IMR-90 (cell line): ENCODE measurements at regions of chr3 and their contacts with region 1.

Region 1: DNA sequence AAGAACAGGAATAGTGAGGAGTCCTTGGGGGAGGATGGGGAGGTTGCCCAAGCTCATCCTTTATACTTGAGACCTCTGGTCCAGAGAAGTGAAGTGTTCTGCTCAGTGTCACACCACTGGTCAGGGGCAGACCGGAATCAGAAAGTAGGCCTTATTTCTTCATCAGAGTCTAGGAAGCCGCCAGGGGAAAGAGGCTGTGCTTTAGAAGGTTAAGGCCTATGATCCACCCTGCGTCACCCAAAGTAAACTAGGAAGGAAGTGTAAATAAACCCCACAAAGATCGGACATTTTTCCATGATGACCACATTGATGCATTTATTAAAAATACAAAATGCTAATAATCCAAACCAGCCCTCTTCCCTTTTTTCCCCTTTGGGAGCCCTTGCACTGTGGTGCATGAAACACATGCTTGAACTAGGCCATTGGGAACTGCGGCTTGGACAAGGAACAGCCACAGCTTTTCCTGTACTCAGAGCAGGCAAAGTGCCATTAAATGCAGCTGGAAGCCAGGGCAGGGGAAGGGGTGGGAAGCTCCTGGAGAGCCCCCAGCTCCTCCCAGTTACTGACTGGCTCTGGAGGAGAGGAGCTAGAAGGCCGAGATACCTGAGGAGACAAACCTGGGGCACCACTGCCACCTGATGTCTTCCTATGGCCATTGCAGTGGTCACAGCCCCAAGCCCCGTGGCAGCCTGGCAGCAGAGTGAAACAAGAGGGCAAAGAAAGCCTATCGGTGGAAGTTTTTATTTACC is 37.0 kb downstream of the CDC25A start:
- DNase-seq: peak; percentile 87
- ATAC-seq: peak; percentile 93
- H3K4me3 ChIP-seq: no peak overlapping the region
- H3K27ac ChIP-seq: peak overlapping the region; percentile 57
- H3K4me1 ChIP-seq: peaks cover 13% of the 10 kb centered on the region
- H3K27me3 ChIP-seq: no peaks in the 10 kb centered on the region
- CTCF ChIP-seq: peak; percentile 91
- POLR2A ChIP-seq: no peak
- RAD21 ChIP-seq: peak; percentile 96

Region 2: DNA sequence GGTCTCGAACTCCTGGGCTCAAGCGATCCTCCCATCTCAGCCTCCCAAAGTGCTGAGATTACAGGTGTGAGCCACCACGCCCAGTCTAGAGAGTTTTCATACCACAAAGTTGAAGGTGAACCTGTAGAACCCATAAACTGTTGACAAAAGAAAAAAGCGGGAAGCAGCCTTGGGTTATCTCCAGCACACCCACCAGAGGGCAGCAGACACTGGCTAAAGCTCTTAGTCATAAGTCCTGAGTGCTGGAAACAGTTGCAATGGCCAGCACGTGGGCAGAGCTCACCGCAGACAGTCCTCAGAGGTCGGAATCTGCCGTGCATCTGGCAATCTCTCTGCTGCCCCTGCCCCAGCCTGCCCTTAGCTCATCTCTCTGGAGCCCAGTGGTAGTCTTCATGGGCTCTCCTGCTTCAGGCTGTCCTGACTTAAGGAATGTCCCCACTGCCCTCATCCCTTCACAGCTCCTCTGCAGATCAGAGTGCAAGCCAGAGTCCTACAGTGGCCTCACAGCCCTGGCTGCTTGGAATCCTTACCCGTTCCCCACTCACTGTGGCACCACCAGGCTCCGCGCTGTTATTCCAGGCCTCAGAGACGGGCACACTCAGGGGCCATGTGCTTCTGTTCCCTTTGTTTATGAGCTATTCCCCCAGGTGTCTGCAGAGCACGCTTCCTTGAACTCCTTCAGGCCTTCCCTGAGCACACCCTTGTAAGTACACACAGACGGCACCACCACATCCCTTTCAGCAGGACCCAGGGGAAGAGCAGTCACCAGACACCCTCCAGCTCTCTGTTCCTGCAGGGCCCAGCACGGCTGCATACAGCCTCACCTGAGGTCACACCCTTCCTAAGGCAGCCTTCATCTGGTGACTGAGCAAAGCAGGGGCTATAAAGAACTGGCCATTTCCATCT is 628.9 kb before region 1 on chr3:
- CTCF ChIA-PET with region 1: no interaction called
- POLR2A ChIA-PET with region 1: no interaction called
- dilution Hi-C with region 1: no loop called
- in situ Hi-C with region 1: no loop called
- intact Hi-C with region 1: loop called (anchors 10 kb)
- DNase-seq: peak; percentile 91
- ATAC-seq: peak; percentile 99
- H3K4me3 ChIP-seq: no peak overlapping the region
- H3K27ac ChIP-seq: no peak overlapping the region
- H3K4me1 ChIP-seq: no peaks in the 10 kb centered on the region
- H3K27me3 ChIP-seq: no peaks in the 10 kb centered on the region
- CTCF ChIP-seq: peak; percentile 94
- POLR2A ChIP-seq: peak; percentile 60; the same call in 1 of the 2 replicates
- RAD21 ChIP-seq: peak; percentile 98

Region 3: DNA sequence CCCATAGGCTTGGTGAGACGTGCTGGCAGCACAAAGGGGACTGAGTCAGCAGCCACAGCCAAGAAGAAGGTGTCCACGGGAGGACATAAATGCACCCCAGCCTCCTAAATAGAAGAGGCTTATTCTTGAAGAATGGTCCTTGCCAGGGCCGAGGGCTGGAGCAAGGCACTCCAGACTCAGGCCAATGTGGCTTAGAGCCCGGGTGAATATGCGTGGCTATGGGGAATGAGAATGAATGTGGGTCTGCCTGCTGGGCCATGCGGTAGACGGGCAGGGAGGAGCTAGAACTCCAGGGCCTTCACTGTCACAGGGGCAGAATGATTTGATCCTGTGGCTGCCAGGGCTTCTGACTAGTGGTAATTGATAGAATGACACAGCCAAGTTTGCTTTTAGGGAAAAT is 314.2 kb before region 1 on chr3:
- CTCF ChIA-PET with region 1: interaction called, 9 read pairs
- POLR2A ChIA-PET with region 1: no interaction called
- dilution Hi-C with region 1: no loop called
- in situ Hi-C with region 1: loop called (anchors 5 kb)
- intact Hi-C with region 1: loop called (anchors 1 kb)
- DNase-seq: no peak
- ATAC-seq: no peak
- H3K4me3 ChIP-seq: no peak overlapping the region
- H3K27ac ChIP-seq: no peak overlapping the region
- H3K4me1 ChIP-seq: no peaks in the 10 kb centered on the region
- H3K27me3 ChIP-seq: no peaks in the 10 kb centered on the region
- CTCF ChIP-seq: no peak
- POLR2A ChIP-seq: no peak
- RAD21 ChIP-seq: no peak

Region 4: DNA sequence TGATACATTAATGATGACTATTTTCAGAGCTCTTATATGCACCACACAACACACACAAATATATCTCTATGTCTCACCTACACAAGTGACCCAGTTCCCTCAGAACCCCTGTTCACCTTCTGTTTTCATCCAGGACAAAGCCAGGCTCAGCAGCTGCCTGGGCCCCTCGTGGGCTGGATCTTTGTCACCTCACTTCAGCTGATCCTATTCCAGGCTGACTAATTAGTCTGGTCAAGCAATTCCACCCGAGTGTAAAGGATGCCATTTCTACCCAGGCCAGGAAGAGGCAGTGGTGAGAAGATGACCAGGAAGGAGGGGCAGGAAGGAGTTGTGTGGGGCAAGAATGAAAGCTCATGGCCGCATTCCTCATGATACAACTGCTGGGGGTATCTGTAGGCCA is 286.0 kb before region 1 on chr3:
- CTCF ChIA-PET with region 1: interaction called, 5 read pairs
- POLR2A ChIA-PET with region 1: no interaction called
- dilution Hi-C with region 1: no loop called
- in situ Hi-C with region 1: loop called (anchors 10 kb)
- intact Hi-C with region 1: loop called (anchors 10 kb)
- DNase-seq: no peak
- ATAC-seq: peak; percentile 55
- H3K4me3 ChIP-seq: no peak overlapping the region
- H3K27ac ChIP-seq: no peak overlapping the region
- H3K4me1 ChIP-seq: no peaks in the 10 kb centered on the region
- H3K27me3 ChIP-seq: no peaks in the 10 kb centered on the region
- CTCF ChIP-seq: 0 out of 2 replicates have a peak, but pooled peaks have one; percentile 4
- POLR2A ChIP-seq: no peak
- RAD21 ChIP-seq: 0 out of 2 replicates have a peak, but pooled peaks have one; percentile 4

Region 5: DNA sequence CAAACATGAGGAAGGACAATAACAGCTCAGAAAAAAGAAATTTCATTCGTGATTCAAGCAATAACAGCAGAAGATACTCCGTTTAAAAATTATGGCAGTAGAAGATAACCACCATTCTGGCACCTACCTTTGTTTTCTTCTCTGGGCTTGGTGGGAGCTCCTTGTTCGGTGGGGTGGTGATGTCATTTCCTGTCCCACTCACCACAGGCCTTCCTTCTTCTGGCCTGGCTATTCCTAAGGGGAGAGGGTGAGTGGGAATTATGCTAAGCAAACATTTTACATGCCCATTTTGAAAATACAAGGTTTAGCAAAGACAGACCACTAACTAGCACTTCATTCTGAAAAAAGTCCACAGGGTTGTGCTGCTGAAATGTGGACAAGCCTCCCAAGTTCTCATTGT is 273.9 kb before region 1 on chr3:
- CTCF ChIA-PET with region 1: interaction called, 4 read pairs
- POLR2A ChIA-PET with region 1: no interaction called
- dilution Hi-C with region 1: no loop called
- in situ Hi-C with region 1: no loop called
- intact Hi-C with region 1: loop called (anchors 10 kb)
- DNase-seq: peak; percentile 37
- ATAC-seq: no peak
- H3K4me3 ChIP-seq: no peak overlapping the region
- H3K27ac ChIP-seq: no peak overlapping the region
- H3K4me1 ChIP-seq: no peaks in the 10 kb centered on the region
- H3K27me3 ChIP-seq: no peaks in the 10 kb centered on the region
- CTCF ChIP-seq: no peak
- POLR2A ChIP-seq: no peak
- RAD21 ChIP-seq: no peak

Region 6: DNA sequence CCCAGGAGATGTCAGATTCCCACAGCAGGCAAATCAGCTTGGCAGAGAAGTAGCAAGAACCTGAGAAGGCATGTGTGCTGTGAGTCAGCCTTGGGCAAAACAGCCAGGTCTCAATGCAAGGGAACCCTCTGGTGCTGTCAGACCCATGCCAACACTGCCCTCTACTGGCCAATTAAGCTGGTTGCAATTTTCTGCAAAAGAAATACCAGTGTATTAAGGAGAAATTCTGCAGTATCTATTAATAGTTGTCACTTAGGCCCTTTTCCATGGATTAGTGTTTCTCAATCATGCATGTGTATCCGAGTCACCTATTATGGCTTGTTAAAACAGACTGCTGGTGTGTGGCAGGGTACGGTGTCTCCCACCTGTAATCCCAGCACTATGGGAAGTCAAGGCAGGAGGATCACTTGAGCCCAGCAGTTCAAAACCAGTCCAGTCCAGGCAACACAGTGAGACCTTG is 161.2 kb before region 1 on chr3:
- CTCF ChIA-PET with region 1: interaction called, 6 read pairs
- POLR2A ChIA-PET with region 1: no interaction called
- dilution Hi-C with region 1: no loop called
- in situ Hi-C with region 1: loop called (anchors 5 kb)
- intact Hi-C with region 1: loop called (anchors 1 kb)
- DNase-seq: peak; percentile 96
- ATAC-seq: peak; percentile 87
- H3K4me3 ChIP-seq: no peak overlapping the region
- H3K27ac ChIP-seq: no peak overlapping the region
- H3K4me1 ChIP-seq: peaks cover 4% of the 10 kb centered on the region; the same call in 1 of the 2 replicates
- H3K27me3 ChIP-seq: no peaks in the 10 kb centered on the region
- CTCF ChIP-seq: peak; percentile 97
- POLR2A ChIP-seq: no peak
- RAD21 ChIP-seq: peak; percentile 95

Region 7: GRCh38 chr3:48088749-48089466 is 62.3 kb before region 1 on chr3:
- CTCF ChIA-PET with region 1: interaction called, 9 read pairs
- POLR2A ChIA-PET with region 1: no interaction called
- dilution Hi-C with region 1: no loop called
- in situ Hi-C with region 1: no loop called
- intact Hi-C with region 1: loop called (anchors 1 kb)
- DNase-seq: peak; percentile 95
- ATAC-seq: peak; percentile 96
- H3K4me3 ChIP-seq: peak overlapping the region; percentile 84
- H3K27ac ChIP-seq: peak overlapping the region; percentile 92
- H3K4me1 ChIP-seq: 0 out of 2 replicates have a peak, but pooled peaks cover 6% of the 10 kb centered on the region
- H3K27me3 ChIP-seq: no peaks in the 10 kb centered on the region
- CTCF ChIP-seq: no peak
- POLR2A ChIP-seq: peak; percentile 95
- RAD21 ChIP-seq: peak; percentile 12; the same call in 1 of the 2 replicates